PC-3 (cell line): ENCODE measurements at regions of chr4 and their contacts with region 1.

Region 1: DNA sequence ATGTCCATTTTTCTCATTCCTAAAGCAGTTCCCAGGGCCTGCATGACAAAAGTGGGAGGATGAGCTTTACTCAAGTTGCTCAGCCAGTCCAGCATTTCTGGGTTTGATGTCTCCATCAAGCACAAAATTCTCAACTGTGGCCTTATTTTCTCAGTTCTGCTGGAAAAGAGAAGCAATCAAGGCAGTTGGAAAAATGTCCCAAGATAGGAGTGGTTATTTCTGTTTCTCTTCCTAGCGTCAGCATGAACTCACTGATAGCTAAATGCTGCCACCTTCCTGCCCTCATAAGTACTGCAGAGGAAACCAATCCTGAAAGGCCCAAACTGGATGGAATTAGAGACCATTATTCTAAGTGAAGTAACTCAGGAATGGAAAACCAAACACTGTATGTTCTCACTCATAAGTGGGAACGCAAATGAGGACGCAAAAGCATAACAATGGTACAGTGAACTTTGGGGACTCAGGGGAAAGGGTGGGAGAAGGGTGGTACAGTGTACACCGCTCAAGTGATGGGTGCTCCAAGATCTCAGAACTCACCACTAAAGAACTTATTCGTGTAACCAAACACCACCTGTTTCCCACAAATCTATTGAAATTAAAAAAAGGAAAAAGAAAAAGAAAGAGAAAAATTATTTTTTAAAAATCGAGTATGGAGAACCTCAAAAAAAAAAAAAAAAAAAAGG is 29.6 kb downstream of the ADH7 start:
- DNase-seq: peak; percentile 83
- ATAC-seq: peak; percentile 61
- H3K4me3 ChIP-seq: no peak overlapping the region
- H3K27ac ChIP-seq: peak overlapping the region; percentile 69; the same call in 1 of the 2 replicates
- H3K4me1 ChIP-seq: peaks cover 17% of the 10 kb centered on the region
- H3K27me3 ChIP-seq: no peaks in the 10 kb centered on the region
- CTCF ChIP-seq: peak; percentile 85

Region 2: DNA sequence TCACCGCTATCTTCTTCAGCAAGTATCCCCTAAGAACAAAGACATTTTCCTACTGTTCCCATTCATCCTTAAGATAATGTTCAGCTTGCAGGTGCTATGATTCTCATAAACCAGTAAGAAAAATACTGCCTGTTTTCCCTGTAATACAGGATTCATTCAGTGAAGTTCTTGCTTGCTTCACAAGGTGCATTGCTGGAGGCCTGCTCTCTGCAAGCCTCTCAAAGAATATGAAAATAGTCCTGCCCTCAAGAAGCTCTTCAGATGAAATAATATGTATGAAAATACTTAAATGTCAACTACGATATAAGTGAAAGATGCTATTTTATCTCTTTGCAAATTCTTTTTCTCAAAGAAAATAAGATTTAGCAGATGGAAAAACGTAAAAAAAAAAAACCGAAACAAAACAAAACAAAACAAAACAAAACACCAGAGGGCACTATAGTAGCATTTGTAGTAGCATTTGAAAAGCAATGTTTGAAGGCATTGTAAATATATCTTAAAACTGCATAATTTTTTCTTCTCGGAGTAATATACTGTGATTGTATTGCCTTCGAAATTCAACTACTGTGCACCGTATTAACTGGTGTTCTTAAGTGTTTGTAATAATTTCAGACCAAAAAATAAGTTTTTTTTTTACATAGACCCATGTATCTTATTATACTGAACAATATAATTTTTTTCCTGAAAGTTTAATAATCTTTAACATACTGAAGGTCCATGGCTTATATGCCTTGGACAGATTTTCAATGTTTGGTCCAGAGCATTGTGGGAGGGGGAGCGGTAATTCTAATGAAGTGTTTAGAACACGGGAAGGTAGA is 287.5 kb before region 1 on chr4:
- CTCF ChIA-PET with region 1: no interaction called
- POLR2A ChIA-PET with region 1: no interaction called
- intact Hi-C with region 1: loop called (anchors 1 kb)
- DNase-seq: peak; percentile 51
- ATAC-seq: no peak
- H3K4me3 ChIP-seq: peak overlapping the region; percentile 4; the same call in 1 of the 2 replicates
- H3K27ac ChIP-seq: no peak overlapping the region
- H3K4me1 ChIP-seq: no peaks in the 10 kb centered on the region
- H3K27me3 ChIP-seq: no peaks in the 10 kb centered on the region
- CTCF ChIP-seq: peak; percentile 63

Region 3: DNA sequence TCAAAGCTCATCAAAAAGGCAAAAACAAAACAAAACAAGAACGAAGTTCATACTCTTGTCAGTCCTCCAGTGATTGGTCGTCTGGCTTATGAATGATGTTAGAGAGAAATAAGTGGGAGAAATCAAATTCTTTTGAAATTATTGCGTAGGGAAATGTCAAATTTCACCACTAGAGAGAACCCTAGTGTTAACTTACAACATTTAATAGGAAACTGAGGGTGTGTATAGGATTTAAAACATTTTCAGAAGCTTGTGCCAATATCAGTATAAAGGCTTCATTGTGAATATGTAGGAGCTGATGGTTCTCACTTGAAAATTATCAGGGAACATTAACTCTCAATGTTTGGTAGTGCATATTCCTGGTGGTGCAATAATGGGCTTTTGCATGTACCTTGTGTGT is 203.9 kb before region 1 on chr4:
- CTCF ChIA-PET with region 1: no interaction called
- POLR2A ChIA-PET with region 1: no interaction called
- intact Hi-C with region 1: loop called (anchors 1 kb)
- DNase-seq: no peak
- ATAC-seq: no peak
- H3K4me3 ChIP-seq: no peak overlapping the region
- H3K27ac ChIP-seq: no peak overlapping the region
- H3K4me1 ChIP-seq: no peaks in the 10 kb centered on the region
- H3K27me3 ChIP-seq: no peaks in the 10 kb centered on the region
- CTCF ChIP-seq: peak; percentile 30; the same call in 1 of the 2 replicates

Region 4: DNA sequence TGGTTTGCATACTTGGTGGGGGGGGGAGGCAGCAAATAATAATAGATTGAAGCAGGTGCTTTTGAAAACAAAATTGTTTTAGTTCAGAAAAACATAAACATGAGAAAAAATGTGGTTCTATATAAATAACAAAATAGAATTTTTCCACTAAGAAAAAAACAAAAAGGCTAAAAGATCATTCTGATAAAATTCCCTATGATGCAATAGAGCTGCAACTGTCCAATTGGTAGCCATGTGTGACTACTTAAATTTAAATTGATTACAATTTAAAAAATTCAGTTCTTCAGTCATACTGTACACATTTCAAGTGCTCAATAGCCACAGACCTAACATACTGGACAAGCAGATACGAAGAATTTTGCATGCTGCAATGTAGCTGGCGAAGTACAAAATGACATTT is 147.3 kb after region 1 on chr4:
- CTCF ChIA-PET with region 1: no interaction called
- POLR2A ChIA-PET with region 1: no interaction called
- intact Hi-C with region 1: no loop called
- DNase-seq: no peak
- ATAC-seq: no peak
- H3K4me3 ChIP-seq: no peak overlapping the region
- H3K27ac ChIP-seq: no peak overlapping the region
- H3K4me1 ChIP-seq: no peaks in the 10 kb centered on the region
- H3K27me3 ChIP-seq: no peaks in the 10 kb centered on the region
- CTCF ChIP-seq: no peak